ENCODE measurements at regions of chr17 and their contacts with region 1.

Region 1: DNA sequence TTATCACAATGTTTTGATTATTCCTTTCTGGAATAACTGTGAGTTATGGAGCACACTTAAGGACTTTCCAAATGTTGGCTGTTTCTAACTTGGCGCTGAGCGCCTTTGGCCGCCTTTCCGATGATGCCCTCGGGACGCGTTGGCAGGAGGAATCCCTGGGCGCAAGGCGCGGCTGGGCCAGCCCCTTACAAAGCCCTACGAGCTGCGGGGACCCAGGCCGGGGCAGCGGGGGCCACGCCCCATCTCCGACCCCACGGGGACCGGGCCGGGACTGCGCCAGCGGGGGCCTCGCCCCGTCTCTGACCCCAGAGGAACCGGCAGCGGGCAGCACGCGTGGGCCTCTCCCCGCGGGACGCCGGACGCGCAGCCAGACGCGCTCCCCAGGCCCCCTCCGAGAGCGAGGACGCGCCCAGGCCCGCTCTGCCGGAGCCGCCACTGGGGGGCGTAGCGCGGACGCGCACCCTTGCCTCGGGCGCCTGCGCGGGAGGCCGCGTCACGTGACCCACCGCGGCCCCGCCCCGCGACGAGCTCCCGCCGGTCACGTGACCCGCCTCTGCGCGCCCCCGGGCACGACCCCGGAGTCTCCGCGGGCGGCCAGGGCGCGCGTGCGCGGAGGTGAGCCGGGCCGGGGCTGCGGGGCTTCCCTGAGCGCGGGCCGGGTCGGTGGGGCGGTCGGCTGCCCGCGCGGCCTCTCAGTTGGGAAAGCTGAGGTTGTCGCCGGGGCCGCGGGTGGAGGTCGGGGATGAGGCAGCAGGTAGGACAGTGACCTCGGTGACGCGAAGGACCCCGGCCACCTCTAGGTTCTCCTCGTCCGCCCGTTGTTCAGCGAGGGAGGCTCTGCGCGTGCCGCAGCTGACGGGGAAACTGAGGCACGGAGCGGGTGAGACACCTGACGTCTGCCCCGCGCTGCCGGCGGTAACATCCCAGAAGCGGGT is at the start of gene GAA:
- DNase-seq: no peak
- H3K4me3 ChIP-seq: peak within 1 kb of the TSS; percentile 98
- CTCF ChIP-seq: peak; percentile 80

Region 2: DNA sequence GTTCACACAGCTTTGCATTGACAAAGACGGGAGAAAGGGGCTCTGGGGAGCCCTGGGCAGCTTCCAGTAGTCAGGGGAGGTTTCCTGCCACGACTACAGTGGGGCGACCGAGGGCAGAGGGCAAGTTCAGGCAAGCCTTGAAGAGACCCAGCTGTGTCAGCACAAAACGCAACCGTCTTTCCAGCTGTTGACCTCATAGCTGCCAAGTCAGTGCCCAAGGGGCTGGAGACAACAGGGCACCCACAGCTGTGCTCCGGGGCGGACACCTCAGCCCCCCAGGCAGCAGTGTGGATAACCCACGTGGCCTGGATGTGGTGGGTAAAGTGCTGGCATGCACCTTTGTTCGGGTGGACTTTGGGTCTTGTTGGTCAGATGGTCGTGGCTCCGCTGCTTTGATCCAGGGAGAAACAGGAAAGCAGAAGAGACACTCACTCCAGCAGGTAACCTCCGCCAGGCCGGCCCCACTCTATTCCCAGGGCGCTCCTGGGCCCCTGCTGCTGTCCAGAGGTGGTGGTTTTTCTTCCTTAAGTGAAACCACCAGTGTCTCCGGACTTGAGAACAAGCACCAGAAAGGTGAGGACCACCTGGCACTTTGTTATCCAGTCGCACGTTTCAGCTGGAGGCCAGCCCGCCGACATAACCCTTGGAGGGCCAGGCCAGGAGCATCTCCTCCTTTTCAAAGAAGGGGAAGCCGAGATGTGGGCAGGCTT is 340.9 kb before region 1 on chr17:
- CTCF ChIA-PET with region 1: no interaction called
- POLR2A ChIA-PET with region 1: no interaction called
- DNase-seq: no peak
- H3K4me3 ChIP-seq: no peak overlapping the region
- CTCF ChIP-seq: no peak

Region 3: GRCh38 chr17:79970576-79971068 is 130.7 kb before region 1 on chr17:
- CTCF ChIA-PET with region 1: no interaction called
- POLR2A ChIA-PET with region 1: no interaction called
- DNase-seq: no peak
- H3K4me3 ChIP-seq: no peak overlapping the region
- CTCF ChIP-seq: peak; percentile 23

Region 4: GRCh38 chr17:80045703-80046102 is 55.6 kb before region 1 on chr17:
- CTCF ChIA-PET with region 1: no interaction called
- POLR2A ChIA-PET with region 1: no interaction called
- DNase-seq: no peak
- H3K4me3 ChIP-seq: no peak overlapping the region
- CTCF ChIP-seq: no peak

Region 5: GRCh38 chr17:80124351-80124981 is 23.2 kb after region 1 on chr17:
- CTCF ChIA-PET with region 1: interaction called, 62 read pairs
- POLR2A ChIA-PET with region 1: no interaction called
- DNase-seq: no peak
- H3K4me3 ChIP-seq: no peak overlapping the region
- CTCF ChIP-seq: peak; percentile 60

Region 6: GRCh38 chr17:80132906-80133625 is 31.8 kb after region 1 on chr17:
- CTCF ChIA-PET with region 1: interaction called, 41 read pairs
- POLR2A ChIA-PET with region 1: no interaction called
- DNase-seq: no peak
- H3K4me3 ChIP-seq: no peak overlapping the region
- CTCF ChIP-seq: no peak

Region 7: GRCh38 chr17:80138856-80139426 is 37.7 kb after region 1 on chr17:
- CTCF ChIA-PET with region 1: interaction called, 11 read pairs
- POLR2A ChIA-PET with region 1: interaction called, 3 read pairs
- DNase-seq: no peak
- H3K4me3 ChIP-seq: no peak overlapping the region
- CTCF ChIP-seq: no peak

Region 8: DNA sequence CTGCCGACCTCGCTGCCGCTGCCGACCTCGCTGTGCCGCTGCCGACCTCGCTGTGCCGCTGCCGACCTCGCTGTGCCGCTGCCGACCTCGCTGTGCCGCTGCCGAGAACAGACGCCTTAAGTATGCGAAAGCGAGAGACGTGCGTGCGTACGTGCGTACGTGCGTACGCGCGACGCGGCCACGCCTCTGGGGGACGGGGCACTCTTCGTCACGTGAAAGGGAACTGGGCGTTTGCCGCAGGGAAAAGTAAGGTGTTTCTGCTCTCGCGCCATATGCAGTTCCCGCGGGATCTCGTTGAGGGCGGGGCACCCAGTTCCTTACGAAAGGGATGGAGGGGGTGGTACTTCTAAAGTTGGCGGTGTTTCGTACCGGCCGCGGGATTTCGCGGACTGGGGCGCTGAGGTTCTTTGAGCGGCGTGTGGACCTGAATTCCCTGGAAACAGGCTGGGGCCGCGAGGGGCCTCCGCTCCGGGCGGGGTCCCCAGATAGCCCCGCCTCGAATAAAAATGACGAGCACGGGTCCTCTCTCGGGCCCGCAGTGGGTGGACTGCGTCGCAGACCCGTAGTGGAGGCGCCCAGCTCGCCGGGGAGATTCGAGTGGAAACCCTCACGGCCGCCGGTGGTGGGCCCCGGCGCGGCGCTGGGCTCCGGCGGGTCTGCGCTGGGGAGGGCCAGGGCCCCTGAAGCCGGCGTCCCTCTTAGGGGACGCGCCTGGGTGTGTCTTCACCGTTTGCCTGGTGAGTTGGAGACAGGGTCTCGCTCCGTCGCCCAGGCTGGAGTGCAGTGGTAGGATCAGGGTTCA is 46.0 kb after region 1 on chr17 and contains the start of gene EIF4A3:
- CTCF ChIA-PET with region 1: interaction called, 13 read pairs
- POLR2A ChIA-PET with region 1: interaction called, 10 read pairs
- DNase-seq: peak; percentile 93
- H3K4me3 ChIP-seq: peak within 1 kb of the TSS; percentile 97
- CTCF ChIP-seq: no peak

Region 9: GRCh38 chr17:80152081-80152990 is 51.1 kb after region 1 on chr17:
- CTCF ChIA-PET with region 1: interaction called, 11 read pairs
- POLR2A ChIA-PET with region 1: no interaction called
- DNase-seq: no peak
- H3K4me3 ChIP-seq: no peak overlapping the region
- CTCF ChIP-seq: no peak

Region 10: GRCh38 chr17:80559825-80560251 is 458.6 kb after region 1 on chr17:
- CTCF ChIA-PET with region 1: no interaction called
- POLR2A ChIA-PET with region 1: no interaction called
- DNase-seq: peak; percentile 76
- H3K4me3 ChIP-seq: no peak overlapping the region
- CTCF ChIP-seq: no peak

Measured in AG04449 (cell line).